ENCODE measurements at regions of chr11 and their contacts with region 1.

Region 1: DNA sequence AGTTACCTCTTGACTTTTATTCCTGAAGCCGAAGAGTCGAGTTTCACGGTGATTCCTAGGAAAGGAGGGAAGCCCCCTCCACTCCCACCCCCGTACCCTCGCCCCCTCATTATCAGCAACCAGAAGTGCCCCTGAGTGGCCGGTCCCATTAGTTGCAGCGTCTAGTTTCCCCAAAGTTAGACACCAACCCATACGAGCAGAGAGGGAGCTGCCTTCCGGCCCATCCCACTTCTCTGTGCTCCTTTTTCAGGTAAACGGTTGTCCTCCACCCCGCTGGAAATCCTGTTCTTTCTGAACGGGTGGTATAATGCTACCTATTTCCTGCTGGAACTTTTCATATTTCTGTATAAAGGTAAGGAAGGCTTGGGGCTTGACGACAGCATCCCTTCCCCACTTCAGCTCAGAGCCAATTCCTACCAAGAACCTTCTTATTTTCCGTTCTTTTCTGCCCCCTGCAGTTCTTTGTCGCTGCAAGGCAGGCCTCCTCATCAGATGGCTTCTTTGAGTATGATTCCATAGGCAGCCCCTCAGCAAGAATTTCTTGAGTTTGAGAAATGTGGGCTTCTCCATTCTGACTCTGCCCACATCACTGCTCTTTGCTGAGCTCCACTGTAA is 701 bp downstream of the TMEM216 start:
- DNase-seq: no peak
- ATAC-seq: peak; percentile 42
- H3K4me3 Mint-ChIP-seq: peak overlapping the region; percentile 97
- H3K27ac Mint-ChIP-seq: peak overlapping the region; percentile 96
- H3K4me1 Mint-ChIP-seq: peaks cover 26% of the 10 kb centered on the region
- H3K27me3 Mint-ChIP-seq: no peaks in the 10 kb centered on the region
- CTCF ChIP-seq: no peak

Region 2: DNA sequence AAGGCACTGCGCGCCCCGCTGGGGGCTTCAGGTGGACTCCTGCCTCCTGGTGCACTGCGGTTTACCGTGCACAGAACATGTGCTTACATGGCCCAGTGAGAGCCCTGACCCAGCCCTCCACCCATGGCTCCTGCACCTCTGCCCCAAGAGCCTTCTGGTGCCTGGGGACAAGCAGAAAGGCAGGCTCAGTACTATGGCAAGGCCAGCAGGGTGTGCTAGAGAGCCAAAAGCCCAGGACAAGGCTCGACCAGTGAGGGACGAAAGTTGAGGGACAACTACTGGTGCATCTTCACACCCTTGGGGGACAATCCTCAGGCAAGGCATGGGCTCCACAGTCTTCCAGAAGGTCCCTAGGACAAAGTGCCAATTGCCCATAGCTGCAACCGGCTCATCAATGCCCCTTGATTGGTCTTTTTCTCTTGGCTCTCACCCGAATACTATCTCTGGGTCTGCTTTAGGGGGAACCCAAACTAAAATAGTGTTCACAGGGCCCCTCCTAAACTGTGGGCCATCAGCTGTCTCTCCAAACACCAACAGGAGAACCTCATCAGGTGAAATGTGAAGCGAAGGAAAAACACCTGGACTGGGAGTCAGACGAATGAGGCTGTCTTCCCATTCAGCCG is 138.6 kb before region 1 on chr11:
- CTCF ChIA-PET with region 1: interaction called, 8 read pairs
- POLR2A ChIA-PET with region 1: no interaction called
- intact Hi-C with region 1: loop called (anchors 1 kb)
- DNase-seq: peak; percentile 49
- ATAC-seq: peak; percentile 93
- H3K4me3 Mint-ChIP-seq: no peak overlapping the region
- H3K27ac Mint-ChIP-seq: no peak overlapping the region
- H3K4me1 Mint-ChIP-seq: no peaks in the 10 kb centered on the region
- H3K27me3 Mint-ChIP-seq: no peaks in the 10 kb centered on the region
- CTCF ChIP-seq: no peak

Region 3: GRCh38 chr11:61353131-61354067 is 39.7 kb before region 1 on chr11:
- CTCF ChIA-PET with region 1: interaction called, 11 read pairs
- POLR2A ChIA-PET with region 1: interaction called, 32 read pairs
- intact Hi-C with region 1: loop called (anchors 2 kb)
- DNase-seq: no peak
- ATAC-seq: no peak
- H3K4me3 Mint-ChIP-seq: peak overlapping the region; percentile 90
- H3K27ac Mint-ChIP-seq: peak overlapping the region; percentile 98
- H3K4me1 Mint-ChIP-seq: peaks cover 69% of the 10 kb centered on the region
- H3K27me3 Mint-ChIP-seq: no peaks in the 10 kb centered on the region
- CTCF ChIP-seq: no peak

Measured in activated B cell treated with CpG ODN at 0.5 μM for 24 hours (primary cell).